ENCODE measurements at regions of chr14 and their contacts with region 1.

Region 1: DNA sequence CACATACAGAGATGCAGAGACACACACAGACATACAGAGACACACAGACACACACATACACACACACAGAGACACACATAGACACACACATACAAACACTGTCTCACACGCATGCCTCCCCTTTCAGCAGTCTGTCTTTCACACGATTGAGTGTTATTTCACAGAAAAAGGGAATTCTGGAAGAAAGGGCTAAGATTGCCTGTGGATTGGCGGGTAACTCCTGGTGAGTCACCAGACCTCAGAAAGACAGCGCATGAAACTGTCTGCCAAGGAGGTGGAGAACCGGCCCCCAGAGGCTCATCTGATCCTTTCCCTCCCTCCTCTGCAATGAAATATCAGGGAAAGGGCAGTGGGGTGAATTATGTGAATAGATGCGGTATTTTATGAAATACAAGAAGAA is 127.2 kb upstream of the GSC start:
- DNase-seq: no peak
- H3K4me3 ChIP-seq: no peak overlapping the region
- H3K27ac ChIP-seq: no peak overlapping the region
- H3K4me1 ChIP-seq: no peaks in the 10 kb centered on the region
- H3K27me3 ChIP-seq: no peaks in the 10 kb centered on the region
- CTCF ChIP-seq: no peak
- POLR2A ChIP-seq: no peak

Region 2: GRCh38 chr14:94876306-94876705 is 20.8 kb before region 1 on chr14:
- CTCF ChIA-PET with region 1: no interaction called
- POLR2A ChIA-PET with region 1: no interaction called
- dilution Hi-C with region 1: no loop called
- intact Hi-C with region 1: loop called (anchors 2 kb)
- DNase-seq: no peak
- H3K4me3 ChIP-seq: no peak overlapping the region
- H3K27ac ChIP-seq: no peak overlapping the region
- H3K4me1 ChIP-seq: no peaks in the 10 kb centered on the region
- H3K27me3 ChIP-seq: no peaks in the 10 kb centered on the region
- CTCF ChIP-seq: no peak
- POLR2A ChIP-seq: no peak

Region 3: GRCh38 chr14:94952097-94952496 is 55.0 kb after region 1 on chr14:
- CTCF ChIA-PET with region 1: no interaction called
- POLR2A ChIA-PET with region 1: no interaction called
- dilution Hi-C with region 1: no loop called
- intact Hi-C with region 1: no loop called
- DNase-seq: no peak
- H3K4me3 ChIP-seq: no peak overlapping the region
- H3K27ac ChIP-seq: no peak overlapping the region
- H3K4me1 ChIP-seq: no peaks in the 10 kb centered on the region
- H3K27me3 ChIP-seq: no peaks in the 10 kb centered on the region
- CTCF ChIP-seq: no peak
- POLR2A ChIP-seq: no peak

Region 4: DNA sequence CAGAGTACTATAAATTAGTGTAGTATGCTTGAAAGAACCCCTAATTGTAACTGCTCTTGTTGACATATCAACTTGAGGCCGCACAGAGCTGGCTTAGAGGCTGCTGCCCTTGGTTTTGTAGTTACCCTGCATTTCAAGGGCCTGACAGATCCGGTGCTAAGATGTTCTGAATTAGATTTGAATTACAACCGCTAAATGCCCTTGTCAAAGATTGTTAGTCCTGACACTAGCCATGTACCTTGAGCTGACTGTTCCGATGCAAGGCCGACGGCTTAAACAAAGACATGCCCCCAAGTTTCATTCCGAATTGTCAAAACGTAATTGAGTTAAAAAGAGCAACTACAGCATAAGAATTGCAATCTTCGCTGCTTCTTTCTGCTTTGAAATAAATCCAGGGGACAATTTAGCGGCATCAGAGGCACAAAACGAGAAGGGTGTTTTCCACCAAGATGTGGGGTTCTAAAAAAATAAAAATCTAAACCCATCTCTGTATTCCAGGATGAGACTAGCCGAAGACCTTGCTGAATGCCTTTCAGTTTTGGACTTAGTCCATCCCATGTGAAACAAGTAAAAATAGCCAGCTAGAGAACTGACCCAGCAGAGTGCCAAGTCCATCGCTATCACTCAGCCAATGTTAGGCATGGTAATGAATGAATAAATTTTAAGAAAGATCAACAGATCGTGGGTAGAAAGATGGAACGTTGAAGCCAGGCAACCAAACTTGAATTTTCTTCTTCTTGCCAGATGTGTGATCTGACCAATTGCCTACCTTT is 111.5 kb after region 1 on chr14:
- CTCF ChIA-PET with region 1: no interaction called
- POLR2A ChIA-PET with region 1: no interaction called
- dilution Hi-C with region 1: no loop called
- intact Hi-C with region 1: no loop called
- DNase-seq: no peak
- H3K4me3 ChIP-seq: no peak overlapping the region
- H3K27ac ChIP-seq: no peak overlapping the region
- H3K4me1 ChIP-seq: no peaks in the 10 kb centered on the region
- H3K27me3 ChIP-seq: no peaks in the 10 kb centered on the region
- CTCF ChIP-seq: no peak
- POLR2A ChIP-seq: no peak